Activated CD8-positive, alpha-beta T cell treated with anti-CD3 and anti-CD28 coated beads, Interleukin-2, amount 10 ng/mL, durations not matched to agents 7 days and 5 days (primary cell): ENCODE measurements at regions of chr9 and their contacts with region 1.

Region 1: DNA sequence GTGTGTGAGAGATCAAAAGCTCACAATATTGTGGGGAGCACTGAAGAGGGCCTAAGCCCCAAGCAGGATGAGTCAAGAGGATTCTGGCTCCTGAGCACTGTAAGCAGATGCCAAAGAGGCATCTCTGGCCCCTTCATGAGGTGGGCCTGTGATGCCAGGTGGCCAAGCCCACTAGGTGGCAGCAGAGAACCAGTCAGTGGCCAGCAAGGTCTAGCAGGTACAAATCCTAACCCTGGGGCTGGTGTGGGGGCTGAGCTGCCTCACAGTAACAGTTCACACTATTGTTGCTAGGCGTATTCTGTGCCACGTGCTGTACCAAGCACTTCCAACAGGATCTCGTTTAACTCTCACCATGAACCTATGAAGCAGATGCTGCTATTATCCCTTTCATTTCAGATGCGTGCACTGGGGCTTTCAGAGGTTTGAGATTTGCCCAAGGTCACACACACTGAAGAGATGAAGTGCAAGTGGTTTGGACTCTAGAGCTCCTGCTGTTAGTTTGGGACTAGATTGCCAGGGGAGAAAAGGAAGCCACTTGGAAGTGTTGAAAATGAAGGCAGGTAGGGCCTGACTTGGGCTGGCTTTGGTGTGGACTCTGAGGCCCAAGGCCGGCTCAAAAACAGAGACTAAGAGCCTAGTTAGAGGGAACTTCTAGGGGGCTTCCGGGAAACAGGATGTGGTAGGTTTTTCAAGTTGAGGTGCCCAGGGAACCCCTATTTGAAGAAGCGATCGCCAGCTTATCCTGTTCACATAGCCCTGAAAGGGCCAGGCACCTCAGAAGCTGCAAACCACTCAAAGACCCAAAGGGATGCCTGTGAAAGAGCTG is 4.4 kb upstream of the MLANA start:
- DNase-seq: peak; percentile 89
- ATAC-seq: peak; percentile 96
- H3K4me3 Mint-ChIP-seq: no peak overlapping the region
- H3K27ac Mint-ChIP-seq: peak overlapping the region; percentile 73
- H3K4me1 Mint-ChIP-seq: peaks cover 19% of the 10 kb centered on the region
- H3K27me3 Mint-ChIP-seq: peaks cover 13% of the 10 kb centered on the region

Region 2: GRCh38 chr9:5832543-5833529 is 53.5 kb before region 1 on chr9 and contains the start of gene ERMP1:
- CTCF ChIA-PET with region 1: interaction called, 67 read pairs
- POLR2A ChIA-PET with region 1: no interaction called
- DNase-seq: peak; percentile 90
- ATAC-seq: peak; percentile 90
- H3K4me3 Mint-ChIP-seq: peak within 1 kb of the TSS; percentile 97
- H3K27ac Mint-ChIP-seq: peak within 1 kb of the TSS; percentile 78
- H3K4me1 Mint-ChIP-seq: peaks cover 58% of the 10 kb centered on the region
- H3K27me3 Mint-ChIP-seq: peaks cover 3% of the 10 kb centered on the region
- total RNA-seq, gene ERMP1: 28.0 to 30.6 TPM

Region 3: DNA sequence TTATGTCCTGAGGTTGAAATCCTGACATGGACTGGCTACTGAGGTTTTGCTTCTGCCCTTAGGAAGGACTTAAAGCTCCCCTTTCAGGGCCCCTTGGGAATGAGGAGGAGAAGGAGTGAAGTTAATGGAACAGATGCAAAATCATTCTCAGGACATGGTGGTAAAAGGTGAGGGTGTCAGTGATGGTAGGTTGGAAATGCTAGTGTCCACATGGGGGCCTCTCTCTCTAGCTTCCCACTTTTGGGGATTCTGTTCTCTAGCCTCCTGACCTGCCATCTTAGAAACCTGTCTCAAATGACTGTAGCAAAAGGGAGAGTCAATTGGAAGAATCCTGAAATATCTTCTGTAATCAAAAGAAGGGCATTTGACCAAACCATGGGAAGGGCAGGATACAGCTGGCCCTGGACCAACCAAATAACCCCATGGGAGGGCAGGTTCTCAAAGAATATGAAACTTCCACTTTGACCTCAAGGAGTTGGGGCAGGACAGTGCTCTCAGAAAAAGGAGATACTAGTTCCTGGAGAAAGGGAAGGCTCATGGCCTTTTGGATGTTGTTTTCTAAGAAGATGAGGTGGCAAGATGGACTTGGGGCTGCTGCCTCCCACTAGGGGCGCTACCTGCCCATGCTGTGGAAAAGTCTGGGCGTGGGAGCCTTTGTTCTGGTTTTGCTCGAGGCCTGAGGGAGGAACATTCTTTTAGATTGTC is 16.9 kb before region 1 on chr9:
- CTCF ChIA-PET with region 1: interaction called, 21 read pairs
- POLR2A ChIA-PET with region 1: no interaction called
- DNase-seq: peak; percentile 35
- ATAC-seq: no peak
- H3K4me3 Mint-ChIP-seq: no peak overlapping the region
- H3K27ac Mint-ChIP-seq: peak overlapping the region; percentile 22
- H3K4me1 Mint-ChIP-seq: peaks cover 19% of the 10 kb centered on the region
- H3K27me3 Mint-ChIP-seq: no peaks in the 10 kb centered on the region

Region 4: DNA sequence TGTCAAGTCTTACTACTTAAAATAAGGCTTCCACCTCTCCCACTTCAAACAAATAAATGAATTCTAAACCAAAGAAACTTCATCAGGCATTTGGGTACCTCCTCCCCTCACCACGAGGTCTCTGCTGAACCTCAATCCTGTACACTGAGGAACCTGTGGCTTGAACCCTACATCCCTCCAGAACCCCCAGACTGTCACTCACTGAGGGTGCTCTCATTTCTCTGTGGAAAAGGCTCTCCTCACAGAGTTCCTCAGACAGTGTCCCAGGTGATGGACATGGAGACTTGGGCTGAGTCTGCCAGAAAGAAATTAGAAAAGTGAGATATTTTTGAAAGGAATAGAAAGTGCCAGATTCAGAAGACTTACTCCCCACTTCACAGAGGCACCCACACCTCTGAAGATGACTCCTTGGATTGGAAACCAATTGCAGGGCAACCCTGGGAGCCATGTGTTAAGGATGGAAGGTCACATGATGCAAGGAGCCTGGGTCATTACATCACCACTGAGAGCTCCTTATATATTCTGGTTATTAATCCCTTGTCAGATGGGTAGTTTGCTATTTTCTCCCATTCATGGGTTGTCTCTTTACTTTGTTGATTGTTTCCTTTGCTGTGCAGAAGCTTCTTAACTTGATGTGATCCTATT is 24.2 kb after region 1 on chr9:
- CTCF ChIA-PET with region 1: interaction called, 17 read pairs
- POLR2A ChIA-PET with region 1: no interaction called
- DNase-seq: no peak
- ATAC-seq: no peak
- H3K4me3 Mint-ChIP-seq: no peak overlapping the region
- H3K27ac Mint-ChIP-seq: peak overlapping the region; percentile 30
- H3K4me1 Mint-ChIP-seq: peaks cover 15% of the 10 kb centered on the region
- H3K27me3 Mint-ChIP-seq: no peaks in the 10 kb centered on the region

Region 5: DNA sequence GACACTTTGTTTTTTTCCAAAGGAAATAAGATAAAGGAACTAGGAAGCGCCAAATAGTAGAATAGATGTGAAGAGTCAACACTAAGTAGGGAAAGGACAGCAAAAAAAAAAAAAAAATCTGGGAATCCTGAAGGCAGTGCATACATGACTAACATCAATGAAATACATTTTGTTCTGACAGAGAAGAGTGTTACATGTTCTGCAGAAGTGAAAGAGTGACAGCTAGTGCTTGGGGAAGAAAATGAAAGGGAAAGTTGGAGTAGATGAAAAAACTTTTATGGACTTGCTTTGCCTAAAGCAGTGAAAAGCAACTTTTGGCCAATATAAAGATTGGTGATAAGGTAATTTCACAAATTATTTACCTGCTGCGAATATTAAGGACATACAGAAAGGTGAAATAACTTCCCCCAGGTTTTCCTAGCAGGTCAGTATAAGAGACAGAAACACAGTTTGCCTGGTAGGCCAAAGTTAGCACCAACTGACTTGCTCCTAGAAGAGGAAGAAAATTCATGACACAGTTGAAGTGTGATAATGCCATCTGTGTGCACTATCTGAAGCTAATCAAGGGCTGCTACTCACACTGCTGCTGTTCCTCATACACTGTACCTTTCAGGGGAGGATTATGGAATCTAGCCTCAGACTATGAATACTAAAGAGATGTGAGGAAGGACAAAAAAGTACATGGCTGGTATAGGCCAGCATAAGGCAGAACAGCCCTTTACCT is 90.5 kb after region 1 on chr9:
- CTCF ChIA-PET with region 1: interaction called, 22 read pairs
- POLR2A ChIA-PET with region 1: no interaction called
- DNase-seq: no peak
- ATAC-seq: peak; percentile 57
- H3K4me3 Mint-ChIP-seq: no peak overlapping the region
- H3K27ac Mint-ChIP-seq: peak overlapping the region; percentile 70
- H3K4me1 Mint-ChIP-seq: peaks cover 11% of the 10 kb centered on the region
- H3K27me3 Mint-ChIP-seq: no peaks in the 10 kb centered on the region

Region 6: GRCh38 chr9:6024020-6024554 is 137.8 kb after region 1 on chr9:
- CTCF ChIA-PET with region 1: interaction called, 12 read pairs
- POLR2A ChIA-PET with region 1: no interaction called
- DNase-seq: peak; percentile 57
- ATAC-seq: peak; percentile 82
- H3K4me3 Mint-ChIP-seq: peak overlapping the region; percentile 26
- H3K27ac Mint-ChIP-seq: no peak overlapping the region
- H3K4me1 Mint-ChIP-seq: peaks cover 8% of the 10 kb centered on the region
- H3K27me3 Mint-ChIP-seq: peaks cover 4% of the 10 kb centered on the region

Region 7: GRCh38 chr9:6305954-6306563 is 419.7 kb after region 1 on chr9:
- CTCF ChIA-PET with region 1: interaction called, 18 read pairs
- POLR2A ChIA-PET with region 1: no interaction called
- DNase-seq: no peak
- ATAC-seq: no peak
- H3K4me3 Mint-ChIP-seq: no peak overlapping the region
- H3K27ac Mint-ChIP-seq: no peak overlapping the region
- H3K4me1 Mint-ChIP-seq: no peaks in the 10 kb centered on the region
- H3K27me3 Mint-ChIP-seq: peaks cover 20% of the 10 kb centered on the region

Region 8: GRCh38 chr9:6428940-6429889 is 542.9 kb after region 1 on chr9:
- CTCF ChIA-PET with region 1: no interaction called
- POLR2A ChIA-PET with region 1: no interaction called
- DNase-seq: peak; percentile 33
- ATAC-seq: peak; percentile 88
- H3K4me3 Mint-ChIP-seq: peak overlapping the region; percentile 38
- H3K27ac Mint-ChIP-seq: peak overlapping the region; percentile 72
- H3K4me1 Mint-ChIP-seq: peaks cover 67% of the 10 kb centered on the region
- H3K27me3 Mint-ChIP-seq: no peaks in the 10 kb centered on the region